ENCODE measurements at regions of chr16 and their contacts with region 1.

Region 1: GRCh38 chr16:20741554-20742285 is at the start of gene THUMPD1:
- DNase-seq: peak; percentile 72
- ATAC-seq: peak; percentile 98
- H3K4me3 ChIP-seq: peak within 1 kb of the TSS; percentile 96
- H3K27ac ChIP-seq: peak within 1 kb of the TSS; percentile 92
- H3K4me1 ChIP-seq: peaks cover 4% of the 10 kb centered on the region; the same call in 1 of the 2 replicates
- H3K27me3 ChIP-seq: no peaks in the 10 kb centered on the region
- CTCF ChIP-seq: peak; percentile 6 to 20 (median 19); a peak in 2 of 6 replicates
- EP300 ChIP-seq: no peak
- POLR2A ChIP-seq: peak; percentile 95
- RAD21 ChIP-seq: no peak
- polyA plus RNA-seq, gene THUMPD1: 21.5 to 26.1 TPM

Region 2: DNA sequence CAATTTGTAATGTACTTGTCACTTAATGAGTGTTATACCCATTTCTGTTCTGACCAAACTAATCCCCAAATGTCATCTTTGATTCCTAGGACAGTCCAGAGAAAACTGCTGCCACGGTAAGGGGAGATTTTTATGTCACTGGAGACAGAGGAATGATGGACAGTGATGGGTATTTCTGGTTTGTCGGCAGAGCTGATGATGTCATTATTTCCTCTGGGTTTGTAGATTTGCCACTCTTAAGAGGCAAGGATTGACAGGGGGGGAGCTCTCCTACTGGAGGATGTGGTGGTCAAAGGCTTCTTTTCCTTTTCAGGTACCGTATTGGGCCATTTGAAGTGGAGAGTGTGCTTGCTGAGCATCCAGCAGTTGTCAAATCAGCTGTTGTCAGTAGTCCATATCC is 12.6 kb before region 1 on chr16:
- CTCF ChIA-PET with region 1: interaction called, 16 read pairs
- POLR2A ChIA-PET with region 1: no interaction called
- RAD21 ChIA-PET with region 1: no interaction called
- SMC1A ChIA-PET with region 1: interaction called, 4 read pairs
- in situ Hi-C with region 1: no loop called
- intact Hi-C with region 1: no loop called
- DNase-seq: no peak
- ATAC-seq: no peak
- H3K4me3 ChIP-seq: no peak overlapping the region
- H3K27ac ChIP-seq: no peak overlapping the region
- H3K4me1 ChIP-seq: no peaks in the 10 kb centered on the region
- H3K27me3 ChIP-seq: no peaks in the 10 kb centered on the region
- CTCF ChIP-seq: no peak
- EP300 ChIP-seq: no peak
- POLR2A ChIP-seq: no peak
- RAD21 ChIP-seq: no peak

Region 3: GRCh38 chr16:20806168-20807050 is 64.7 kb after region 1 on chr16 and contains the starts of genes ERI2 and REXO5:
- CTCF ChIA-PET with region 1: no interaction called
- POLR2A ChIA-PET with region 1: interaction called, 4 read pairs
- RAD21 ChIA-PET with region 1: no interaction called
- SMC1A ChIA-PET with region 1: interaction called, 3 read pairs
- in situ Hi-C with region 1: no loop called
- intact Hi-C with region 1: loop called (anchors 2 kb)
- DNase-seq: peak; percentile 59
- ATAC-seq: peak; percentile 92
- H3K4me3 ChIP-seq: peak within 1 kb of the TSS; percentile 88
- H3K27ac ChIP-seq: peak within 1 kb of the TSS; percentile 94
- H3K4me1 ChIP-seq: peaks cover 7% of the 10 kb centered on the region
- H3K27me3 ChIP-seq: no peaks in the 10 kb centered on the region
- CTCF ChIP-seq: peak; percentile 41 to 57 (median 56); a peak in 5 of 6 replicates
- EP300 ChIP-seq: no peak
- POLR2A ChIP-seq: peak; percentile 76
- RAD21 ChIP-seq: no peak
- polyA plus RNA-seq, gene ERI2: 7.7 to 7.8 TPM
- polyA plus RNA-seq, gene REXO5: 3.8 to 4.1 TPM

Measured in GM12878 (cell line).